ENCODE measurements at regions of chr6 and their contacts with region 1.

Region 1: GRCh38 chr6:163427498-163428254 is 13.2 kb downstream of the QKI start:
- DNase-seq: no peak
- ATAC-seq: peak; percentile 79
- H3K4me3 ChIP-seq: no peak overlapping the region
- H3K27ac ChIP-seq: no peak overlapping the region
- H3K4me1 ChIP-seq: peaks cover 62% of the 10 kb centered on the region
- H3K27me3 ChIP-seq: no peaks in the 10 kb centered on the region
- CTCF ChIP-seq: peak; percentile 57

Region 2: DNA sequence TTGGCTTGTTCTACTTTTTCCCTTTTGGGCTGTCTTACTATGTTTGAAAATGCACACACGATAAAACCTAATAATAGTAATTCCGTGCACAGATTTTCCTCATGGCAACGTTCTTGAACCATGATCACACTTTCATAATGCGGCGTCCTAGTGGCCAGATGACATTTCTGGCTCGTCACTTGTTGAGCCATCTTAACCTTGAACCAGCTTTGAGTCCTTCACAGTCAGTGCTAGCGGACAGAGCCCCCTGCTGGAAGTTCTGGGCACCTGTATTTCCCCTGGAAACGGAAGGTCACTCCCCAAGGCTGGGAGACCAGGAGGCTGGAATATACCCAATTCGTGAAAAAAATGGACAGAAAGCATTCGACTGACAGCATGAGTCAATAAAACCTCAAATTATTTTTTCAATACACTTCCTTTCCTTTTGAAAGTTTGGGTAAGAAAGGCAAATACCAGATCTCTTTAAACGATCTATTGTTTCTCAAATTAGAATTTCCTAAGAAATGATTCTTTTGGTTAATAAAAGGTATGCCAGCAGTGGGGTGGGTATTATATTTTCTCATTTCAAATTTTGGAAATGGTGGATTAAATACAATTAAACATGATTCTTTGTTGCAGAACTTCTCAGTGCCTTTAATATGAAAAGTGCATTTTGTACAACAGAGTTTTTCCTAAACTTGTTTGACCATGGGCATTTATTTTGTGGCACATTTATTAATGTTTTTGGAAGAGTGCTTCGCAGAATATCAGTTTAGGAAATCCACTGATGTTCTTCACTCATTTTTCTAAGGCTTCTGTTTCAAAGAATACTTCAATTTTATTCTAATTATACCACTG is 529.1 kb after region 1 on chr6:
- intact Hi-C with region 1: loop called (anchors 10 kb)
- DNase-seq: peak; percentile 81
- ATAC-seq: peak; percentile 98
- H3K4me3 ChIP-seq: no peak overlapping the region
- H3K27ac ChIP-seq: no peak overlapping the region
- H3K4me1 ChIP-seq: no peaks in the 10 kb centered on the region
- H3K27me3 ChIP-seq: no peaks in the 10 kb centered on the region
- CTCF ChIP-seq: peak; percentile 87

Measured in upper lobe of right lung (tissue), 1 donor.